Esophagus muscularis mucosa (tissue), 4 donors: ENCODE measurements at regions of chr16 and their contacts with region 1.

Region 1: DNA sequence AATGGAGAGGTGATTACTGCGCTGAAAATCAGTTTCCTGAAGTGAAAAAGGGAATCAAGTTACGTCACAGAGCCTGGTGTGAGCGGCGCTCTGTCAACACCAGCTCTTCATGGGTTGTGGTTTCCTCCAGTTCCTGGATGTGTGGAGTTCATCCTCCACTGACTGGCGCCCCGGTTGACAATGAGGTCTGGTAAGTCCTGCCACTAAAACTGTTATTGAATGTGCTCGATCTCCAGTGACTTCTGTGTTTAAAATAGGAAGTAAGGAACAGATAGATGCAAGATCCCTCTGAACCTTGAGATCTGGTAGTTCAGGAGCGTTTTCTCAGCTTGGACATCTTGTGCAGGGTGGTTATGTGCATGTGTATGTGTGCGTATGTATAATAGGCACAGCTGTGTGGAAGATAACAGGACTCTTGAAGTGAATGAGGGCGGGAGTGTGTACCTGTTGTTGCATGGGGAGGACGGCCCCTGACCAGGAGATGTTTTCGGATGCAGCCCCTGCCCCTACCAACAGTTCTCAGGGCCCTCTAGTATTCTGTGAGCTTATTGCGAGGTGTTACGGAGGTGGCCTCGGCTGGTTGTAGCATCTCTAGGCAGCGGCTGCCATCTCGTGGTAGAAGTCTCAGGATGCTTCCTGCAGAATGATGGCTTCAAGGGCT is 22.0 kb upstream of the GOT2 start:
- DNase-seq: no peak
- H3K4me3 ChIP-seq: no peak overlapping the region
- H3K27ac ChIP-seq: no peak overlapping the region
- H3K4me1 ChIP-seq: peaks cover 0 to 3% (median 1%) of the 10 kb centered on the region in 4 donors
- H3K27me3 ChIP-seq: no peaks in the 10 kb centered on the region
- CTCF ChIP-seq: peak; percentile 61 to 77 (median 68)
- EP300 ChIP-seq: no peak
- POLR2A ChIP-seq: no peak

Region 2: GRCh38 chr16:58678716-58679115 is 77.4 kb before region 1 on chr16:
- intact Hi-C with region 1: loop called (anchors 2 kb)
- DNase-seq: no peak
- H3K4me3 ChIP-seq: no peak overlapping the region
- H3K27ac ChIP-seq: no peak overlapping the region
- H3K4me1 ChIP-seq: peaks cover 9 to 23% (median 16%) of the 10 kb centered on the region in 4 donors
- H3K27me3 ChIP-seq: no peaks in the 10 kb centered on the region
- CTCF ChIP-seq: peak; percentile 58 to 67 (median 65)
- EP300 ChIP-seq: no peak
- POLR2A ChIP-seq: no peak

Region 3: DNA sequence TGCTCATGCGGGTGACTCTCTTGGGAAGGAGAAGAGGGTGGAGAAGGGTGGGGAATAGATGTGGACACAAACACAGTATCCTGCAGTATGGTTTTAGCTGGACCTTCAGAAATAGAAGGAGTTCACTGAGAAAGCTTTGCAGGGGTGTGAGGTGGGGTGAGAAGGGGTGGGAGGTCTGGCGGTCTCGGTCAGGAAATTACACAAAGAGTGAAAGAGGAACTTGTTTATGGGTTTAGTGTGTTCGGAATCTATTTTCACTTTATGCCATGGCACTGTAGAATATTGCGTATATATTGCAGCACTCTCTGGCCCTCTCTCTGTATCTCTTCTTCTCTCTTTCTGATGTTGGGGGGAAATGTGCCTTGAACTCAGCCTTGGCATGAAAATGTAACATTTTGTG is 126.2 kb after region 1 on chr16:
- intact Hi-C with region 1: no loop called
- DNase-seq: no peak
- H3K4me3 ChIP-seq: no peak overlapping the region
- H3K27ac ChIP-seq: no peak overlapping the region
- H3K4me1 ChIP-seq: no peaks in the 10 kb centered on the region
- H3K27me3 ChIP-seq: no peaks in the 10 kb centered on the region
- CTCF ChIP-seq: no peak
- EP300 ChIP-seq: no peak
- POLR2A ChIP-seq: no peak

Region 4: DNA sequence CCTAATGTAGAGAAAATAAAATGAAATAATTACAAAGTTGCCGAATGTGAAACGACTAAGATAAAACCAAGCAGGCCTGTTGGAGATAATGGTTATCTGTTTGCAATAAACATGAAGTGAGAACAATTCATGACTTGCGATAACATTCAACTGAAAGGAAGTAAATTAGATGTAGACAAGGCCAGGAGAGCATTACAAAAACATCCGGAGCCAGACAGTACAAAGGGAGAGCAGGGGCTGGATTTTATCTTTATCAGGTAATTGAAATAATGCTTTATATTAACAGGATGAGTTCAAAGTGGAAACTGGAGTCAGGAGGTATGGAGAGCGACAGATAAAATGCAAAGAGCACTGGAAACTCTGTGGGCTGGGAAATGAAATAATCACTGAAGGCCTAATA is 243.6 kb after region 1 on chr16:
- intact Hi-C with region 1: no loop called
- DNase-seq: no peak
- H3K4me3 ChIP-seq: no peak overlapping the region
- H3K27ac ChIP-seq: no peak overlapping the region
- H3K4me1 ChIP-seq: no peaks in the 10 kb centered on the region
- H3K27me3 ChIP-seq: no peaks in the 10 kb centered on the region
- CTCF ChIP-seq: no peak
- EP300 ChIP-seq: no peak
- POLR2A ChIP-seq: no peak